ENCODE measurements at regions of chr14 and their contacts with region 1.

Region 1: GRCh38 chr14:21476925-21477681 is at the starts of genes RAB2B and TOX4:
- DNase-seq: peak; percentile 86 to 99 (median 95)
- ATAC-seq: peak; percentile 96
- H3K4me3 ChIP-seq: peak within 1 kb of the TSS; percentile 87 to 94
- H3K4me3 Mint-ChIP-seq: peak within 1 kb of the TSS; percentile 99
- H3K27ac ChIP-seq: peak within 1 kb of the TSS; percentile 93 to 94
- H3K27ac Mint-ChIP-seq: peak within 1 kb of the TSS; percentile 99
- H3K4me1 ChIP-seq: peaks cover 22% of the 10 kb centered on the region
- H3K4me1 Mint-ChIP-seq: peaks cover 52% of the 10 kb centered on the region
- H3K27me3 ChIP-seq: no peaks in the 10 kb centered on the region
- H3K27me3 Mint-ChIP-seq: no peaks in the 10 kb centered on the region
- CTCF ChIP-seq: peak; percentile 98
- total RNA-seq, gene RAB2B: 24.0 to 26.6 TPM
- total RNA-seq, gene TOX4: 95.0 to 100 TPM

Region 2: GRCh38 chr14:21383848-21384493 is 93.1 kb before region 1 on chr14 and contains the start of gene SUPT16H:
- CTCF ChIA-PET with region 1: no interaction called
- POLR2A ChIA-PET with region 1: interaction called, 9 read pairs
- intact Hi-C with region 1: loop called (anchors 1 kb)
- DNase-seq: peak; percentile 83 to 97 (median 93)
- ATAC-seq: peak; percentile 88
- H3K4me3 ChIP-seq: peak within 1 kb of the TSS; percentile 87 to 91
- H3K4me3 Mint-ChIP-seq: peak within 1 kb of the TSS; percentile 98
- H3K27ac ChIP-seq: peak within 1 kb of the TSS; percentile 89 to 96
- H3K27ac Mint-ChIP-seq: peak within 1 kb of the TSS; percentile 99
- H3K4me1 ChIP-seq: peaks cover 17% of the 10 kb centered on the region
- H3K4me1 Mint-ChIP-seq: peaks cover 43% of the 10 kb centered on the region
- H3K27me3 ChIP-seq: no peaks in the 10 kb centered on the region
- H3K27me3 Mint-ChIP-seq: no peaks in the 10 kb centered on the region
- CTCF ChIP-seq: no peak
- total RNA-seq, gene SUPT16H: 53.5 to 54.9 TPM

Region 3: DNA sequence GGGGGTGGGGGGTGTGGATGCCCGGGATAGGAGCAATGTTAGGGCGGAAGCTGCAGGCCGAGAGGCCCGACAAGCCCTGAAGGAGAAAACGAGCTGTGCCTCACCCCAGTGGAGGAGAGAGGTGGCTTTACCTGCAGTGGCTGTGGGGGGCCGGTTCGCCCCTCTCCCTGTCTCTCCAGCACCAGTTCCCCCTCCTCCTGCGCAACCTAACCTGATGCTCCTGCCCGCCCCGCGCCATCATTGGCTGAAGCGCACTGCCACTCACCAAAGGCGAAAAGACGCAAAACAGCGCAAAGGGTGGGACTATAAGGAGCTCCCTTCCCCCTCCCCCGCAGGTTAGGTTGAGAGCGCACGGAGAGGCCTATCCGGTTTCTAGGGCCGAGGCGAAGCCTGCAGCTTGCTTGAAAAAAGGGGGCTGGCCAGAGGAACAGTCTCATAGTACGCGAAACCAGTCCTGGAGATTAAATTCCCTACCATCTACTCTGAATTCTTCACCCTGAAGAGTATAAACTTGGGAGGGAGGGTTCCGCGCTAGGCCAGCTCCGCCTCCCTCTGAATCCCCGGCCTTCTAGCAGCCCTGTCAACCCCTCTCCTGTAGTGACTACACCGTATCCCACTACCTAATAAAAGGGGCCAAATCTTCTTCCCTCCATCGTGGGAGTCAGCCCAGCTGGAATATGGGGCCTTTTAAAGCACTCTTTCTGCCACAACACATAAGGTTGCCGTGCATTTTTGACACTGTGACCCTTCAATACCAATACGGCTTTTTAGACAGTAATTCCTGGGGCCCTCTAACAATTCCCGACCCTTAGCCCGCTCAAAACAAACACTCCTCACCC is 39.8 kb before region 1 on chr14:
- CTCF ChIA-PET with region 1: interaction called, 3 read pairs
- POLR2A ChIA-PET with region 1: interaction called, 13 read pairs
- intact Hi-C with region 1: loop called (anchors 1 kb)
- DNase-seq: peak; percentile 98 to 100 (median 99)
- ATAC-seq: peak; percentile 99
- H3K4me3 ChIP-seq: peak overlapping the region; percentile 74 to 83
- H3K4me3 Mint-ChIP-seq: peak overlapping the region; percentile 96
- H3K27ac ChIP-seq: peak overlapping the region; percentile 76 to 84
- H3K27ac Mint-ChIP-seq: peak overlapping the region; percentile 91
- H3K4me1 ChIP-seq: peaks cover 28% of the 10 kb centered on the region
- H3K4me1 Mint-ChIP-seq: peaks cover 64% of the 10 kb centered on the region
- H3K27me3 ChIP-seq: no peaks in the 10 kb centered on the region
- H3K27me3 Mint-ChIP-seq: no peaks in the 10 kb centered on the region
- CTCF ChIP-seq: no peak

Region 4: GRCh38 chr14:21455911-21456667 is 21.0 kb before region 1 on chr14 and contains the start of gene CHD8:
- CTCF ChIA-PET with region 1: interaction called, 20 read pairs
- POLR2A ChIA-PET with region 1: interaction called, 24 read pairs
- intact Hi-C with region 1: loop called (anchors 1 kb)
- DNase-seq: peak; percentile 98 to 100 (median 99)
- ATAC-seq: peak; percentile 96
- H3K4me3 ChIP-seq: peak within 1 kb of the TSS; percentile 85 to 97
- H3K4me3 Mint-ChIP-seq: peak within 1 kb of the TSS; percentile 100
- H3K27ac ChIP-seq: peak within 1 kb of the TSS; percentile 86 to 98
- H3K27ac Mint-ChIP-seq: peak within 1 kb of the TSS; percentile 100
- H3K4me1 ChIP-seq: peaks cover 21% of the 10 kb centered on the region
- H3K4me1 Mint-ChIP-seq: peaks cover 36% of the 10 kb centered on the region
- H3K27me3 ChIP-seq: no peaks in the 10 kb centered on the region
- H3K27me3 Mint-ChIP-seq: no peaks in the 10 kb centered on the region
- CTCF ChIP-seq: peak; percentile 60
- total RNA-seq, gene CHD8: 132 to 144 TPM

Region 5: GRCh38 chr14:21498553-21499526 is 21.7 kb after region 1 on chr14:
- CTCF ChIA-PET with region 1: interaction called, 19 read pairs
- POLR2A ChIA-PET with region 1: interaction called, 5 read pairs
- intact Hi-C with region 1: no loop called
- DNase-seq: peak in 3 of 9 experiments; percentile 47 to 76 (median 67)
- ATAC-seq: peak; percentile 77
- H3K4me3 ChIP-seq: no peak overlapping the region
- H3K4me3 Mint-ChIP-seq: no peak overlapping the region
- H3K27ac ChIP-seq: peak overlapping the region; percentile 6 to 23
- H3K27ac Mint-ChIP-seq: peak overlapping the region; percentile 73
- H3K4me1 ChIP-seq: peaks cover 13% of the 10 kb centered on the region
- H3K4me1 Mint-ChIP-seq: peaks cover 19% of the 10 kb centered on the region
- H3K27me3 ChIP-seq: no peaks in the 10 kb centered on the region
- H3K27me3 Mint-ChIP-seq: no peaks in the 10 kb centered on the region
- CTCF ChIP-seq: peak; percentile 70

Region 6: DNA sequence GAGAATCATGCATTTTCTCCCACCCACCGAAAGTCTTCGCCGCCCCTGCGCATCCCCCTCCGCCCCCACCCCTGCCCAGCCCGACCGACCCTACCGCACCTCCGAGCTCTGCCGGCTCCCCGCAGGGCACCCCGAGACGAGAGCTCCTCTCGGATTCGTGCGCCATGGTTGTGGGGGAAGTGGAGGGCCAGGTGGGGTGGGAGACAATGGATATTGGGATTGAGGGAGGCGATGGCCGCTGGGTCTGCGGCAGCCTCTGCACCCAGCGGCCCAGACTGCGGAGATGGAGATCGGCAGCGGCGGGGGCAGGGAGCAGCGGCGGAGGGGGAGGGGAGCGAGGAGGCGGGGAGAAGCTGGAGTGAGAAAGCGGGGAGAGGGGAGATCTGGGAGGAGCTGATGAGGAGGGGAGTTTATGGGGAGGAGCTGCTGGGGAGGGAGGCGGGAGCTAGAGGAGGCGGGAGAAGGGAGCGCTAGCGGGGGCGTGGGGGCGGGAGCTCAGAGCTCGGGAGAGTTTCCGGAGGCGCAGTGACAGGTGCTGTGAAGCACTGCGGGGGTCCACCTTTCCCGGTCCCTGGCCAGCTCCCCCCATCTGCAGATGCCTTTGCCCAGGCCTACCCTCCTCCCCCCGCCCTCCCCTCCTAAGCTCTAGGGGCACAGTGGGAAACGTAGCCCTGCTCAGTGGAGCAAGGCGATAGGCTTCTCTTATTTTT is 49.0 kb after region 1 on chr14 and contains the start of gene SALL2:
- CTCF ChIA-PET with region 1: no interaction called
- POLR2A ChIA-PET with region 1: interaction called, 3 read pairs
- intact Hi-C with region 1: loop called in 1 of 2 experiments (anchors 1 kb)
- DNase-seq: peak; percentile 12 to 81 (median 64)
- ATAC-seq: peak; percentile 88
- H3K4me3 ChIP-seq: peak within 1 kb of the TSS; percentile 57 to 62
- H3K4me3 Mint-ChIP-seq: peak within 1 kb of the TSS; percentile 82
- H3K27ac ChIP-seq: peak within 1 kb of the TSS in 1 of 2 experiments; percentile 29
- H3K27ac Mint-ChIP-seq: peak within 1 kb of the TSS; percentile 84
- H3K4me1 ChIP-seq: peaks cover 14% of the 10 kb centered on the region
- H3K4me1 Mint-ChIP-seq: peaks cover 19% of the 10 kb centered on the region
- H3K27me3 ChIP-seq: no peaks in the 10 kb centered on the region
- H3K27me3 Mint-ChIP-seq: no peaks in the 10 kb centered on the region
- CTCF ChIP-seq: no peak
- total RNA-seq, gene SALL2: 1.4 to 1.6 TPM